Activated CD4-positive, alpha-beta T cell treated with anti-CD3 and anti-CD28 coated beads for 36 hours (primary cell): ENCODE measurements at regions of chr7 and their contacts with region 1.

Region 1: DNA sequence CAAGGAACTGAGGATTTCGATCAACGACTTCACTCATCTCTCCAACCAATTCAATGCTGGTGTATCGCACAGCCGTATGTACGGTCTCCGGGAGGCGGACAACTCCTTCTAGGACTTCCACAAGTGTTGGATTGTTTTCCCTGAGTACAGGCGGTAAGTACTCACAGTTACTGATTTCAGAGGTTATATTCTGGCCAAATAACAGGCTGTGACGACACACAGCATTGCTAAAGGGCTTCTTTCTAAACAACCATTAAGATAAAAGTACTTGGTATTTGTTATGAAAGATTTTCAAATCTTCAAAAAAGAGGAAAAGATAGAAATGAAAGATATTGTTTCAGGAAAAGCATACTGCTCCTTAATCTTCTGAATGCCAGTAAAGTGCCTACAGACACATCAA is 52.2 kb downstream of the IRF5 start:
- DNase-seq: no peak
- ATAC-seq: no peak
- H3K4me3 Mint-ChIP-seq: no peak overlapping the region
- H3K27ac Mint-ChIP-seq: no peak overlapping the region
- H3K4me1 Mint-ChIP-seq: no peaks in the 10 kb centered on the region
- H3K27me3 Mint-ChIP-seq: no peaks in the 10 kb centered on the region

Region 2: GRCh38 chr7:129006636-129007414 is 16.9 kb after region 1 on chr7:
- CTCF ChIA-PET with region 1: no interaction called
- POLR2A ChIA-PET with region 1: no interaction called
- intact Hi-C with region 1: no loop called
- DNase-seq: no peak
- ATAC-seq: no peak
- H3K4me3 Mint-ChIP-seq: no peak overlapping the region
- H3K27ac Mint-ChIP-seq: no peak overlapping the region
- H3K4me1 Mint-ChIP-seq: peaks cover 32% of the 10 kb centered on the region
- H3K27me3 Mint-ChIP-seq: no peaks in the 10 kb centered on the region

Region 3: DNA sequence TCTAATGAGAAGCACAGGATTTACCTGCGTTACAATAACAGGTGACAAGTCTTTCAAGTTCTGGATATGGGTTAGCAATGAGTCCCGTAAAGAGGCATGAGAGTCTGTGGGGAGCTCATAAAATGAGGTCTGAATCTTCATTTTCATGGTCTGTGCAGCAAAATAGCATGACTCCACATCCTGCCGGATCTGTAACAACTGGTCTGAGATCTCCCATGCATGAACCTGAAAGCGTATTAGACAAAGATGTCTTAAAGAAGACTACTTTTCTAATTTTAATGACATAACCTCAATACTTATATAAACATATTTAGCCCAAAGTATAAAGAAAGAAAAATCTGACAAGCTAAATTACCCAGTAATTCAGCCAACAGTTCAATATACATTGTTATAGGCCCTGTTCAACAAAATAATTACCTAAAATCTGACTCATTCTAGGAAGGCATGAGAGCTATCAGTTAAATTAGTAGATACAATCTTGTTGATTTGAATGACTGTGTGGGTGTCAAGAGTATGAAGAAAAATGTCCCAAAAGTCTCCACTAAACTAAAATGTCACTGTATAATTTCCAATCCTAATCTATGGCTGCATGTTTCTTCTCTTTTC is 28.1 kb after region 1 on chr7:
- CTCF ChIA-PET with region 1: no interaction called
- POLR2A ChIA-PET with region 1: no interaction called
- intact Hi-C with region 1: no loop called
- DNase-seq: no peak
- ATAC-seq: no peak
- H3K4me3 Mint-ChIP-seq: no peak overlapping the region
- H3K27ac Mint-ChIP-seq: no peak overlapping the region
- H3K4me1 Mint-ChIP-seq: peaks cover 34% of the 10 kb centered on the region
- H3K27me3 Mint-ChIP-seq: no peaks in the 10 kb centered on the region

Region 4: DNA sequence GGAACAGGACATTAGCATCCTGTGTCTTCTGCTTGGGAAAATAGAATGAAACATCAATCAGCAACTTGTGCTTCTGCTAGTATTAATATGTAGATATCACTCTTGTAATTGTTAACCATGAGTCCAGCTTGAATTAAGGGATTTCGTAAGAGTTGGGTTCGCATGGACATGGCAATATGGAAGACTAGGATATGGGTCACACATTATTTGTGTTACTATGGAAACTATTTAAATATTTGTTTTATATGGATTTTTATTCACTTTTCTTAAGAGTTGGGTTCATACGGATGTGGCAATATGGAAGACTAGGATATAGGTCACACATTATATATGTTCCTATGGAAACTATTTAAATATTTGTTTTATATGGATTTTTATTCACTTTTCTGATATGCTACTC is 40.5 kb after region 1 on chr7:
- CTCF ChIA-PET with region 1: no interaction called
- POLR2A ChIA-PET with region 1: no interaction called
- intact Hi-C with region 1: loop called in 1 of 2 experiments (anchors 2 kb)
- DNase-seq: no peak
- ATAC-seq: no peak
- H3K4me3 Mint-ChIP-seq: no peak overlapping the region
- H3K27ac Mint-ChIP-seq: no peak overlapping the region
- H3K4me1 Mint-ChIP-seq: peaks cover 39% of the 10 kb centered on the region
- H3K27me3 Mint-ChIP-seq: no peaks in the 10 kb centered on the region